ENCODE measurements at regions of chr1 and their contacts with region 1.

Region 1: GRCh38 chr1:205273551-205273982 is 45.8 kb downstream of the TMCC2 start:
- DNase-seq: peak; percentile 88
- ATAC-seq: peak; percentile 88
- H3K4me3 Mint-ChIP-seq: no peak overlapping the region
- H3K27ac Mint-ChIP-seq: peak overlapping the region; percentile 40
- H3K4me1 Mint-ChIP-seq: peaks cover 10% of the 10 kb centered on the region
- H3K27me3 Mint-ChIP-seq: peaks cover 8% of the 10 kb centered on the region

Region 2: DNA sequence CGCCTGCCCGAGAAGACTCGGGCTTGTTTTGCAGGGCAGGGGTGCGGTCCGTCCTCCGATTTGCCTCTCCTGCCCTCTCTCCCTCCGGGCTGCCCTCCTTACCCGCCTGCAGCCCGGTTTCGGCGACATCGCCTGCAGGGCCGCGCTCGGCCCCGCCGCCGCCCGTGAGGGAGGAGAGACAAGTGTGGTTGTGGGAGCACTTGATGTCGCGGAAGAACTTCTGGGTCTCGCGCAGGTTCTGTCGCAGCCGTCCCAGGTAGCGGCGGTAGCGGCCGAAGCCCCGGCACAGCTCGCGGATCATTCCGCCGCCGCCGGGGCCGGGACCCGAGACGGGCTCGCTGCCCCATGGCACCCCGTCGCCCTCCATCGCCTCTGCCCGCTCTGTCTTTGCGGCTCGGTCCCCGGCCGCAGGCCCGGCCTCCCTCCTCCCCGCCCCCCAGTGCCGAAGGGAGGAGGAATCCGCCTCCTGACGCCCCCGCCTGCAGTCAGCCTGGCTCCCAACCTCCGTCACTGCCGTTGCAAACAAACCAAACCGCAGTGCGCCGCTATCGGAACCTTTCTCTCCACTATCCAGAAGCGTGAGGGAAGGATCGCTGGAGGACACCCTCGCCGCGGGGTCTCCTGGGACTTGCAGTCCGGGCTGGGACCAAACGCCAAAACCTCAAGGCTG is 62.3 kb before region 1 on chr1 and contains the start of gene DSTYK:
- CTCF ChIA-PET with region 1: no interaction called
- DNase-seq: peak; percentile 95
- ATAC-seq: peak; percentile 90
- H3K4me3 Mint-ChIP-seq: peak within 1 kb of the TSS; percentile 89
- H3K27ac Mint-ChIP-seq: peak within 1 kb of the TSS; percentile 88
- H3K4me1 Mint-ChIP-seq: peaks cover 50% of the 10 kb centered on the region
- H3K27me3 Mint-ChIP-seq: no peaks in the 10 kb centered on the region
- total RNA-seq, gene DSTYK: 8.7 to 11.6 TPM

Region 3: GRCh38 chr1:205227584-205228006 is 46.0 kb before region 1 on chr1 and contains the start of gene TMCC2:
- CTCF ChIA-PET with region 1: interaction called, 15 read pairs
- DNase-seq: peak; percentile 90
- ATAC-seq: peak; percentile 95
- H3K4me3 Mint-ChIP-seq: peak within 1 kb of the TSS; percentile 91
- H3K27ac Mint-ChIP-seq: peak within 1 kb of the TSS; percentile 75
- H3K4me1 Mint-ChIP-seq: peaks cover 44% of the 10 kb centered on the region
- H3K27me3 Mint-ChIP-seq: peaks cover 48% of the 10 kb centered on the region
- total RNA-seq, gene TMCC2: 2.6 to 5.3 TPM

Region 4: DNA sequence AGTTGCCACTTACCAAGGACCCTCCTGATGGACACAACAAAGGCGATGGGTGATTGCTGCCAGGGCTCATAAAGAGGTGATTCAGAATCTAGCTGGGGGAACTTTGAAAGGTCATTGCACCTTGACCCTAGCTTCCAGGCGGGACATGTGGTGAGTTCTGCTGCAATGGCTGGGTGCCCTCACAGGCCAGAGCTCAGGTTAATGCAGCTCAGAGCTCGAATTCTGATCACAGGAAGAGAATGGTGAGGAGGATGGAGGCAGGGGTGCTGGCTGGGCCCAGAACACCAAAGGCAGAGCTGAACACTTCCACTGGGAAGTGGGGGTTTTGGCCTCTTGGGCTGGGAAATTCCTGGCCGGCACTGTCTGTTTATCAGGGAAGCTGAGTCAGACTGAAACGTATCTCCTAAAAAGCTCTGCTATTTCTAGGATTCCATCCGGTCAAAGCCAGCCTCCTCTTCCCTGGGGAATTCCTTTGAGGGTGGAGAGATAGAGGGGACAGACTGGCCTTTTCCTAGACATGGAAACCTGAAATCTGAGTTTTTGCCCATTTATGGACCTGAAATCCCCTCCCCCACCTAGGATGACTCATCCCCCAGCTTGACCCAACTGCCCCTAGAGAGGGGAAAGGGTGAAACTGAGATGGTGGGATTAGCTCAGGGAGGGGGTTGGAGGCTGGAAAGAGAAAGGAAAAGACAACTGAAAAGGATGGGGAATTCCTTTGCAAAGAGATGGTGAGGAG is 20.8 kb after region 1 on chr1:
- CTCF ChIA-PET with region 1: interaction called, 123 read pairs
- DNase-seq: no peak
- ATAC-seq: no peak
- H3K4me3 Mint-ChIP-seq: no peak overlapping the region
- H3K27ac Mint-ChIP-seq: no peak overlapping the region
- H3K4me1 Mint-ChIP-seq: peaks cover 16% of the 10 kb centered on the region
- H3K27me3 Mint-ChIP-seq: peaks cover 11% of the 10 kb centered on the region

Region 5: DNA sequence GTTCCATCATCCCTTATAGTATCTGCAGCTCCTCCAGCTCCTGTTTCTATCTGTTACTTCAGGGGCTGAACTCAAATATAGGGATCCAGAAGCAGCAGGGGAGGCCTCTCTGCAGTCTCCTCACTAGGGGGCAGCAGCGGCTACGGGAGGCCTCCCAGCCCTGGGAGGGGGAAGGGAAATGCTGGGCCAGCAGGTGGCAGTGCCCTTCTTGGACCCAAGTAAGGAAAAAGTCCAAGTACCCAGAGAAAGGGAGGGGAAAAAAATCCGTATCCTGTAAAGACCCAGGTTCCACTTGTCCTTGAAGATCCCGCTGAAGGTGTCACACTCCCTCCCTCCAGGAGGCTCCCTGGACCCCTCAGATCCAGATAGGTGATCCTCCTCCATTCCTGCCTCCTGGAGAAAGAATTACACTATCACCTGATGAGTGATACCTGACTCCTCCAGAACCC is 62.1 kb after region 1 on chr1:
- CTCF ChIA-PET with region 1: interaction called, 1,096 read pairs
- DNase-seq: peak; percentile 84
- ATAC-seq: peak; percentile 82
- H3K4me3 Mint-ChIP-seq: no peak overlapping the region
- H3K27ac Mint-ChIP-seq: no peak overlapping the region
- H3K4me1 Mint-ChIP-seq: peaks cover 18% of the 10 kb centered on the region
- H3K27me3 Mint-ChIP-seq: peaks cover 46% of the 10 kb centered on the region

Region 6: DNA sequence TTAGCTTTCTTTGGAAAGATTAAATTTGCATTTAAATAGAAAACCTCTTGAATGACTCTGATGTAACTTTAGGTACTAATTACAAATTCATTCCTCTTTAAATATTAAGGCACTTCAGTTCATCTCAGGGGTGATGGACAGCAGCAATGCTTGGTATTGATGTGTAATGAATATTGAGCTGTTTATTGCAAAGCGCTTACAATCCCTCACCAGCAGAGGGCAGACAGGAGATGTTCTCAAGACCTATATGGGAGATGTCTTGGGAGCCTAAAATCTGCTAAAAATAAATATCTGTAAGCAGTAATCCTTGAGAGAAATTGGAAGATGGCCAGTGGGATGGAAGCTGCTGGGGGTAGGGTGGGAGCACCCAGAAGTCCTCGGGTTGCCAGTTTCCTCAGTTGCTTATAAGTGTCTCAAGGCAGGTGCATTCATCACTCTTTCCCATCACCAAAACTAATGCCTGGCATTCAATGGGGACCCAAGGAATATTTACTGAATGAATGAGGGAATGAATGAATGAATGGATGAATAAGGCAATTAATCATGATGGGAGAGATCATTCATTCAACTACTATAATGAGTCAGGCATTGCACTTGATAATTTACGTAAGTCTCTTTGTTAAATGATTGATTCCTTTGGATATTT is 80.8 kb after region 1 on chr1:
- CTCF ChIA-PET with region 1: interaction called, 29 read pairs
- DNase-seq: peak; percentile 74
- ATAC-seq: peak; percentile 72
- H3K4me3 Mint-ChIP-seq: no peak overlapping the region
- H3K27ac Mint-ChIP-seq: no peak overlapping the region
- H3K4me1 Mint-ChIP-seq: no peaks in the 10 kb centered on the region
- H3K27me3 Mint-ChIP-seq: peaks cover 23% of the 10 kb centered on the region